Activated CD4-positive, alpha-beta T cell treated with anti-CD3 and anti-CD28 coated beads for 36 hours (primary cell): ENCODE measurements at regions of chr2 and their contacts with region 1.

Region 1: GRCh38 chr2:126776692-126777619 is 121.0 kb downstream of the GYPC start:
- DNase-seq: peak; percentile 90
- ATAC-seq: peak; percentile 93
- H3K4me3 Mint-ChIP-seq: peak overlapping the region; percentile 77
- H3K27ac Mint-ChIP-seq: peak overlapping the region; percentile 44
- H3K4me1 Mint-ChIP-seq: no peaks in the 10 kb centered on the region
- H3K27me3 Mint-ChIP-seq: peaks cover 7% of the 10 kb centered on the region

Region 2: DNA sequence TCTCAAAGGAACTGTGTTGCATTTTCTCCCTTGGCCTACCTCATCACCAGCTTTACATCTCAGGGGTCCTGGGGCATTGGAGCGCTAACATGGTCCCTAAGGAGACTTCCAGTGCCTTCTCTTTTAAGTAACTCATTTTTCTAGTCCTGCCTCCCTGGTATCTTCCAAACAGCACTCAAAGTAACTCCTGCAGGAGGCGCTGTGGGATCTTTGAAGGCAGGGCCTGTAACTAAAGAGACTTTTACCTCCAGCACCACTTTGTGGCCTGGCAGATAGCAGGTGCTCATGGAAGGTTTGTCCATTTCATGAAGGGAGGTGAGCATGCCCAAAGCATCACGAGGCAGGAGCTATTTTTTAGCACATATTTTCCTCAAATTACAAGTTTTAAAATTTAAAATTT is 532.0 kb before region 1 on chr2:
- CTCF ChIA-PET with region 1: interaction called, 3 read pairs
- POLR2A ChIA-PET with region 1: no interaction called
- intact Hi-C with region 1: loop called (anchors 1 kb)
- DNase-seq: peak; percentile 76
- ATAC-seq: no peak
- H3K4me3 Mint-ChIP-seq: no peak overlapping the region
- H3K27ac Mint-ChIP-seq: no peak overlapping the region
- H3K4me1 Mint-ChIP-seq: no peaks in the 10 kb centered on the region
- H3K27me3 Mint-ChIP-seq: peaks cover 11% of the 10 kb centered on the region

Region 3: GRCh38 chr2:126399001-126399400 is 378.0 kb before region 1 on chr2:
- CTCF ChIA-PET with region 1: interaction called, 5 read pairs
- POLR2A ChIA-PET with region 1: no interaction called
- intact Hi-C with region 1: loop called (anchors 1 to 2 kb)
- DNase-seq: peak; percentile 47
- ATAC-seq: no peak
- H3K4me3 Mint-ChIP-seq: no peak overlapping the region
- H3K27ac Mint-ChIP-seq: no peak overlapping the region
- H3K4me1 Mint-ChIP-seq: no peaks in the 10 kb centered on the region
- H3K27me3 Mint-ChIP-seq: peaks cover 14% of the 10 kb centered on the region

Region 4: DNA sequence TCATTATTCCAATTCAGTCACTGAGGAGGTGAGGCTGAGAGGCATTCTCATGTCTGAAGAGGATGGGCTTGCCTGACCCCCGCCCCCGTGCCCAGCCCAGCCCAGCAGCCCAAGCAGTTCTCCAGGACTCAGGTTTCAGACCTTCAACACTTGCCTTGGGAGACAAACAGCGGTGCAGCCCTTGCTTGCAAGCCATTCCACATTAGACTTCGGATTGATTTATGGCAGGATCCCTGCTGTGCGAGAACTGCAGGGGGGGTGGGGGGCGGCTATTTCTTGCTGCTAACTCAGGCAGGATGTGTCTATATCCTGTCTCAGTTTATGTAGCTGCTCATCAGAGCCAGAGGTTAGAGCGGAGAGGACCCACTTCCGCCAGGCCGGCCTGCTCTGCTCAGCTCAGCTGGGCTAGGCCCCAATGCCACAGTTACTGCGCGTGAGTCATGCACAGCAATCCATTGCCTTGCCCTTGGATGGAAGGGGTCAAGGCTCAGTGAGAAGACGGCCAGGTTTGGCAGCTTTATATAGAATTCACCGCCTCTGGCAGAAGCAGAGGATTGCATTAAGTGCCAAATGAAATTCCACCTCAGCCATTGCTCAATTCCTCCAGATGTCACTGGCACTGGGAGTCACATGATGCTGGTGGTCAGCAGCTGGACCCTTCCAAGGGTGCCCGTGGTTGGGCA is 119.2 kb before region 1 on chr2:
- CTCF ChIA-PET with region 1: interaction called, 4 read pairs
- POLR2A ChIA-PET with region 1: no interaction called
- intact Hi-C with region 1: loop called (anchors 2 to 5 kb)
- DNase-seq: peak; percentile 87
- ATAC-seq: peak; percentile 67
- H3K4me3 Mint-ChIP-seq: peak overlapping the region; percentile 97
- H3K27ac Mint-ChIP-seq: peak overlapping the region; percentile 99
- H3K4me1 Mint-ChIP-seq: peaks cover 59% of the 10 kb centered on the region
- H3K27me3 Mint-ChIP-seq: no peaks in the 10 kb centered on the region

Region 5: DNA sequence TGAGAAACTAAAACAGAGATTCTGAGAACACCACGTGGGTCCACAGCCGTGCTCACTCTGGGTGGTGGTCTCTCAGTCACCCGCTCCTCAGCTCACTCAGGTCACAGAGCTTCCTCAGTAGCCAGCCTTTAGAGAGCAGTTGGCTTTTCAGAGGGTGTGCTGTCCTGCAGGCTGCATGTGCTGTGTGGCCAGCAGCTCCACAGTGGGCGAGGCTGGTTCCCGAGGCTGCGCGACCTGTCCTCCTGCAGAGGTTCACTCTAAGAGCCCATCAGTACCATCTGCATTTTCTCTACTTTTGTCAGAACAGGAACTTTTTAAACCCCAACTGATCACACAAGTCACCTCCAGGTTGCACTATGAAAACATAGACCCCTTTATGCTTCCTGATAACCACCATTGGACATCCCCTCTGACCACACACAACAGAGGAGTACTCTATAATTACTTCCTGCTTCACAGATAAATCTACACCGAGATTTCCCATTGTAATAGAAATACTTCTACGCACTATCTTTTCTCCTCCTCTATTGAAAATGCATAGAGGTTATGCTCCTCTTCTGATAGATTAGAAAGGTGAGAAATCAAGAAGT is 27.9 kb before region 1 on chr2:
- CTCF ChIA-PET with region 1: no interaction called
- POLR2A ChIA-PET with region 1: no interaction called
- intact Hi-C with region 1: no loop called
- DNase-seq: no peak
- ATAC-seq: no peak
- H3K4me3 Mint-ChIP-seq: no peak overlapping the region
- H3K27ac Mint-ChIP-seq: no peak overlapping the region
- H3K4me1 Mint-ChIP-seq: peaks cover under 1% of the 10 kb centered on the region
- H3K27me3 Mint-ChIP-seq: no peaks in the 10 kb centered on the region

Region 6: DNA sequence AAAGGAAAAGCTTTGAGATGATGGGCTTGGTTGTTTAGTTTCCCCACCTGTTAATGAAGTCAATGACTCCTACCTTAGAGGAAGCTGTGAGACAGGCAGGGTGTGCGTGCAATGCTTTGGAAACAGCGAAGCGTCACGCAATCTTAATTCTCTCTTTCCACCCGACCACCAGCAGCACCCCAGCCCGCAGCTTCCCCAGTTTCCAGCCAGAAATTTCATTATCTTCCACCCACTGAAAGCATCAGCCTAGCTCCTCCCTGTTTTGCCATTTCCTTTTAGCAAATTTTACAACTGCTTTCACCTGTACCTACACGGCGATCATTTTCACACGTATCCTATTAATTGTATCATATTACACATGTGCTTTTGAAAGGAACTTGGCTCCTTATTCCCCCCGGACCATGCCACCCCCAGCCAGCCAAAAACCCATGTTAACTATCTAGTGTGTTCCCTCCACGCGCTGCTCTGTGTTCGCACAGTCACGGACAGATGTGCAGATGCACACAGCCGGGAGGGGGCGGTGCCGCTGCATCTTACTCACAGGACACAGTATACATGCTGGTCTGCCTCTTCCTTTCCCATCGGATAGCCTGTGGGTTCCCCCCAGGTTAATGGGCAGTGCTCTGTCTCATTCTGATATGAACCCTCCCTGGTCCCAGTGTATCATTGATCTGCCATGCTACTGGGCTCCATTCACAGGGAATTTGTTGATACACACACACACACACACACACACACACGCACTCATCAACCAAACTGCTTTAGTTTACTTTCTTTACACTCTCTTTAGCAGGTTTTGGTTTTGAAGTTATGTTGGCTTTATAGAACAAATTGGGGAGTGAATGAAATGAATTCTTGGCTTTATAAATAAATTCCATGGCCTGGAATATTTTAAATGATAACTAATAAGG is 420.8 kb after region 1 on chr2:
- CTCF ChIA-PET with region 1: no interaction called
- POLR2A ChIA-PET with region 1: no interaction called
- intact Hi-C with region 1: no loop called
- DNase-seq: peak; percentile 79
- ATAC-seq: peak; percentile 95
- H3K4me3 Mint-ChIP-seq: peak overlapping the region; percentile 58
- H3K27ac Mint-ChIP-seq: no peak overlapping the region
- H3K4me1 Mint-ChIP-seq: no peaks in the 10 kb centered on the region
- H3K27me3 Mint-ChIP-seq: no peaks in the 10 kb centered on the region

Region 7: GRCh38 chr2:127220102-127220767 is 443.3 kb after region 1 on chr2 and contains the start of gene CYP27C1:
- CTCF ChIA-PET with region 1: no interaction called
- POLR2A ChIA-PET with region 1: no interaction called
- intact Hi-C with region 1: no loop called
- DNase-seq: peak; percentile 28
- ATAC-seq: peak; percentile 29
- H3K4me3 Mint-ChIP-seq: peak within 1 kb of the TSS; percentile 67
- H3K27ac Mint-ChIP-seq: peak within 1 kb of the TSS; percentile 42
- H3K4me1 Mint-ChIP-seq: peaks cover 13% of the 10 kb centered on the region
- H3K27me3 Mint-ChIP-seq: peaks cover 54% of the 10 kb centered on the region
- total RNA-seq, gene CYP27C1: not detected